ENCODE measurements at regions of chr15 and their contacts with region 1.

Region 1: DNA sequence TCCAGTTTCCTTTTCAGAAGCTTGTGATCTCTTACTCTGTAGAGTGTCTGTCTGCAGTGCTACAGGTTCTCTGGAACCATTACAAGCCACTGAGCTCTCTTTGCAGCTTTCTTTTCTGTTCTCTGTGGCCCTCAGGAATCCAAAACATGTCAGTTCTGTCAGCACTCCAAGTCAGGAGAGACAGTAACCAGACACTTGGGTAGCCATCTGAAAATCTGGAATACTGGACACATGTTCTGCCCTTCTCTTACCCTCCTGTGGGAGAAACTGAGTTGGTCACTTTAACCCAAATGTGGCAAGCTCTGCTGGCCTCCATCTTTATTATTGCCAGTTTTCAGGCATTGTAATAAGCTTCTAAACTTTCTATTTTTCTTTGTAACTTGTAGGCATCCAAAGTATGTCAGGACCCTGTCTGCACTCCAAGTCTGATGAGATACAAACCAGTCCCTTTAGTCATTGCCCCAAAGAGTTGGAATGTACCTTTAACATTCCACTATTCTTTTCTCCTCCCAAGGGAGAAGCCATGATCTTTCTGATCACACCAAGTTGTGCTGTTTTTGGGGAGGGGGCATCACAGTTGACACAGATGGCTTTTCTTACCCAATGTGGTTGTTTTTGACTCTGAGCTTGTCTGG is 183.7 kb downstream of the DPH6 start:
- DNase-seq: no peak
- ATAC-seq: peak; percentile 95

Region 2: DNA sequence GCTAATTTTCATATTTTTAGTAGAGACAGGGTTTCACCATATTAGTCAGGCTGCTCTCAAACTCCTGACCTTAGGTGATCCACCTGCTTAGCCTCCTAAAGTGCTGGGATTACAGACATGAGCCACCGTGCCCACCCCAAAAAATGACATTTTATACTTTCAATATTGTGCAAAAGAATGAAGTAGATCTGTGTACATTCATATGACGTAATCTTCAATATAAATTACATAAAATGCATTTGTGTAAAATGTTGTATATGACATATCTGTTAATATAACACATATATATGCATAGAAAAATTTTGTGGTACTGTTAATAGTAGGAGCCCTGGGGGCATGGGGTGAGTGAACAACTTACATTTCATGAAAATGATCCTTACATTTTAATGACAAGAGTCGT is 1979.8 kb before region 1 on chr15:
- intact Hi-C with region 1: no loop called
- DNase-seq: no peak
- ATAC-seq: no peak

Region 3: GRCh38 chr15:35309886-35310285 is 52.4 kb before region 1 on chr15:
- intact Hi-C with region 1: loop called (anchors 10 kb)
- DNase-seq: no peak
- ATAC-seq: no peak

Region 4: DNA sequence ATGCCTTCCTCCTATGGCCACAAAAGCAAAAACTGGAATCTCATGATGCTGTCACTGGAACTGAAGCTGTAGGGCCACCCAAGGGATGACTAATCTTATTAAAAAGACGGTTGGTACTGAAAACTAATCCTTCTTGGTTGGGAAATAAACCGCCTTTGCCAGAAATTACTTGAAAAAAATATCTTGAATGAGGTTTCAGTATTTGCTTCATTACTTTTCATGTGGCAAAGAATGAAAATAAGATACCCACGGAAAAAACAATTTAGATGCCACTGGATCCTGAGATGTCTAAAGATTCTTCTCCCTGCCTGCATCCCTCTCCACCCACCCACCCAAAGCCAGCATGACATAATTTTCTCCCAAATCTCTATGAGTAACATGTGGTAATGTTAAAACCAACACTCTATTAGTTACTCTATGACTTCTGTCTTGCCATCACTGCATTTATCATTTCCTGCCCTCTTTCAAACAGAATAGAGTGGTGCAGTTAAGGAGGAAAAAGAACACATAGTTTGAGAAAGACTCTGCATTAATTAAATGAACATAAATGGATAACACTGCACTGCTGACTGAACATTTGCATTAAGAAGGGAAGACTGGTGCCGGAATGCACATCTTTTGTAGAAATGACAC is 295.5 kb after region 1 on chr15:
- intact Hi-C with region 1: no loop called
- DNase-seq: no peak
- ATAC-seq: peak; percentile 36